Heart left ventricle (tissue), 16 donors: ENCODE measurements at regions of chr4 and their contacts with region 1.

Region 1: GRCh38 chr4:21716526-21716925 is 232.0 kb downstream of the KCNIP4 start:
- DNase-seq: no peak
- ATAC-seq: no peak
- H3K4me3 ChIP-seq: no peak overlapping the region
- H3K27ac ChIP-seq: no peak overlapping the region
- H3K4me1 ChIP-seq: no peaks in the 10 kb centered on the region
- H3K27me3 ChIP-seq: no peaks in the 10 kb centered on the region
- CTCF ChIP-seq: no peak
- POLR2A ChIP-seq: no peak

Region 2: DNA sequence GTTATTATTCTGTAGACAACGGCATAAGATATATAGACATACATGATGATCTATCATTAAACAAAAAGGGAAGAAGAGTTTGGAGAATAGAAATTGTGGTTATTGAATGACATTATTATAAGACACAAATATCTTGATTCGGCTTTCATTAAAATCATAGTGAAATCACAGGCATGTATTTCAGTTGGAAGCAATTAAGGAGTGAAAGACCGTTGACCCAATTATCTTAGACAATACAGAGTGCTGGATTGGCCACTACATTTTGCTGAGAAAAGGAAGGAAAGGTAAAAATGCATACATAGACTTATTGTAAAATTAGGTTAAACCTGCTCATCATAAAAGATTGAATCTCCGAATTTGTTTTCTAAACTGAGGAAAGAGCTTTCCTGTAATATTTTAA is 22.3 kb after region 1 on chr4:
- intact Hi-C with region 1: loop called in 1 of 10 experiments (anchors 1 kb)
- DNase-seq: no peak
- ATAC-seq: no peak
- H3K4me3 ChIP-seq: no peak overlapping the region
- H3K27ac ChIP-seq: no peak overlapping the region
- H3K4me1 ChIP-seq: no peaks in the 10 kb centered on the region
- H3K27me3 ChIP-seq: peaks cover 0 to 6% (median 0%) of the 10 kb centered on the region in 9 donors
- CTCF ChIP-seq: no peak
- POLR2A ChIP-seq: no peak

Region 3: GRCh38 chr4:22730021-22730420 is 1013.5 kb after region 1 on chr4:
- intact Hi-C with region 1: no loop called
- DNase-seq: no peak
- ATAC-seq: no peak
- H3K4me3 ChIP-seq: no peak overlapping the region
- H3K27ac ChIP-seq: no peak overlapping the region
- H3K4me1 ChIP-seq: no peaks in the 10 kb centered on the region
- H3K27me3 ChIP-seq: no peaks in the 10 kb centered on the region
- CTCF ChIP-seq: no peak
- POLR2A ChIP-seq: no peak